A673 (cell line): ENCODE measurements at regions of chr3 and their contacts with region 1.

Region 1: DNA sequence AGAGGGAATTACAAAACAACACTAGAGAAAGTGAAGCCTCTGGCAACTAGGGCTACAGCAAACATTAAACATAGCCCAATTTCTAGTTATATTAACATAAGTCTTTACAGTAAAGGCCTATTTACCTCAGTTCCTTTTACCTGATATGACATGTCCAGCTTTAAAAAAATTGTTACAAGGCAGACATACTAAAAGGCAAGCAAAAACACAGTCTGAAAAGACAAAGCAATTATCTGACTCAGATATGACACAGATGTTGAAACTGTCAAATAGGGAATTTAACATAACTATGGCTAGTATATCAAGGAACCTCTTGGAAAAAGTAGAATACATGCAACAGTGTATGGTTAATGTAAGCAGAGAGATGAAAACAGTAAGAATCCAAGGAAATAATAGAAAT is 238.6 kb downstream of the RAP2B start:
- DNase-seq: no peak
- H3K4me3 ChIP-seq: no peak overlapping the region
- H3K27ac ChIP-seq: no peak overlapping the region
- H3K4me1 ChIP-seq: no peaks in the 10 kb centered on the region
- H3K27me3 ChIP-seq: no peaks in the 10 kb centered on the region
- CTCF ChIP-seq: no peak

Region 2: GRCh38 chr3:152825566-152825965 is 575.1 kb before region 1 on chr3:
- CTCF ChIA-PET with region 1: no interaction called
- POLR2A ChIA-PET with region 1: no interaction called
- intact Hi-C with region 1: no loop called
- DNase-seq: no peak
- H3K4me3 ChIP-seq: no peak overlapping the region
- H3K27ac ChIP-seq: no peak overlapping the region
- H3K4me1 ChIP-seq: peaks cover 38% of the 10 kb centered on the region
- H3K27me3 ChIP-seq: no peaks in the 10 kb centered on the region
- CTCF ChIP-seq: no peak

Region 3: GRCh38 chr3:154025007-154025406 is 624.4 kb after region 1 on chr3:
- CTCF ChIA-PET with region 1: no interaction called
- POLR2A ChIA-PET with region 1: interaction called, 10 read pairs
- intact Hi-C with region 1: no loop called
- DNase-seq: no peak
- H3K4me3 ChIP-seq: no peak overlapping the region
- H3K27ac ChIP-seq: no peak overlapping the region
- H3K4me1 ChIP-seq: no peaks in the 10 kb centered on the region
- H3K27me3 ChIP-seq: no peaks in the 10 kb centered on the region
- CTCF ChIP-seq: no peak